K562 (cell line): ENCODE measurements at regions of chr15 and their contacts with region 1.

Region 1: DNA sequence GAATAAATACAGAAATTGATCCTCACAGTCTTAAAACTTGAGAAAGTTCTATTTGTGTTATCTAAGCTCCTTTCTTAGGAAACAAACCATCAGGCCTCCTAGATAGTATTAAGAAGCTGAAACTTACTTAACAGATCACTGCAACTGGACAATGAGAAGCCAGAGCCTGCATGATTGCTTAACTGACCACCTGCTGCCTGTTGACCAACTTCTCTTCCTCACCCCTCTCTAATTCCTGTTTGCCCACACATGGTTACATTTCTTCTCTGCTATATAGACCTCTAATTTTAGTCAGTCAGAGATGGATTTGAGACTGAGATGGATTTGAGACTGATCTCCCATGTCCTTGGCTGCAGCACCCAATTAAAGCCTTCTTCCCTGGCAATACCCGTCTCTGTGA is 13.5 kb downstream of the CCPG1 start:
- DNase-seq: no peak
- ATAC-seq: no peak
- H3K4me3 ChIP-seq: no peak overlapping the region
- H3K27ac ChIP-seq: no peak overlapping the region
- H3K4me1 ChIP-seq: peaks cover 12 to 19% of the 10 kb centered on the region in 2 experiments
- H3K27me3 ChIP-seq: no peaks in the 10 kb centered on the region
- CTCF ChIP-seq: no peak
- EP300 ChIP-seq: no peak
- POLR2A ChIP-seq: no peak
- RAD21 ChIP-seq: no peak

Region 2: DNA sequence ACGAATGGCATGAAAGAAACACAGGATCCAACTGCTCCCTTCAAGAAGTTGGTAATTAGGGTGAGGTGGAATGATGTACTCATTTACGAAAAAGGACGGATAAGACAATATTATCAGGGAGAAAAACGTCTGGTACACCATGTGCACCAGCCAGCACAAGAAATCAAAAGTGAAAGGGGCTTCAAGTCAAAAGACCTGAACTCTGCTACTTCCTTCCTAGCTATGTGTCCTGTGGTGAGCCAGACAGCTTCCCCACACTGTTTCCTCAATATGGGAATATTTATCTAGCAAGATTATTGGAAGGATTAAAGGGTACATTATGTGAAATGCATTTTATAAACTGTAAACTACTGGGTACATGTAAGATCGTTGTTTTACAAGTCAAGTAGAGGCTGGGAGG is 139.0 kb before region 1 on chr15:
- CTCF ChIA-PET with region 1: no interaction called
- POLR2A ChIA-PET with region 1: no interaction called
- in situ Hi-C with region 1: no loop called
- intact Hi-C with region 1: no loop called
- DNase-seq: no peak
- ATAC-seq: peak; percentile 12; the same call in 1 of the 3 replicates
- H3K4me3 ChIP-seq: no peak overlapping the region
- H3K27ac ChIP-seq: 0 out of 3 replicates have a peak overlapping the region, but pooled peaks have one; percentile 10
- H3K4me1 ChIP-seq: peaks cover 3 to 50% of the 10 kb centered on the region in 2 experiments; a peak in 3 of 5 replicates
- H3K27me3 ChIP-seq: no peaks in the 10 kb centered on the region
- CTCF ChIP-seq: no peak
- EP300 ChIP-seq: no peak
- POLR2A ChIP-seq: no peak
- RAD21 ChIP-seq: no peak

Region 3: DNA sequence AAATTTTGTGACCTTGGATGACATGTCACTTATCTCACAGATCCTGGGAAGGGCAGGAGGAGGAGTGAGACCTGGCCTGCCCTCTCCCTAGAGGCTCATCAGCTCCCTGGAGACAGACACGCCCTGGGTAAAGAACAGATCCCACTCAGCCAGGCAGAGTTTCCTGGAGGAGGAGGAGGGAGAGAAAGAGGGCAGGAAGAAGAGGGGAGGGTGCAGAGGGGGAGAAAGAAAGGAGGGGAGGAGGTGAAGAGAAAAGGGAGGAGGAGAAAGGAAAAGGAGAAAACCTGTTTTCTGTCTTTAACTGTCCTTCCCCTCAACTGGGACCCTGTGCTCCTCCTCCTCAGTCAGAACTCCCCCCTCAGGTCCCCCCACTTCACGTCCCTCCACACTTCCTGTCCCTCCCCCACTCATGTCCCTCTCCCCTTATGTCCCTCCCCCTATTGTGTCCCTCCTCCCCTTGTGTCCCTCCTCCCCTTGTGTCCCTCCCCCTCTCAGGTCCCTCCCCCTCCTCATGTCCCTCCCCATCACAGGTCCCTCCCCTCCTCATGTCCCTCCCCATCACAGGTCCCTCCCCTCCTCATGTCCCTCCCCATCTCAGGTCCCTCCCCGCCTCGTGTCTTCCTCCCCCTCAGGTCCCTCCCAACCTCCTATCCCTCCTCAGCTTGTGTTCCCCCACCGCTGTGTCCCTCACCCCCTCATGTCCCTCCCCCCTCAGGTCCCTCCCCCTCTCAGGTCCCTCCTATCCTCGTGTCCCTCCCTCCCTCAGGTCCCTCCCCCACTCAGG is 1929.3 kb after region 1 on chr15:
- CTCF ChIA-PET with region 1: no interaction called
- POLR2A ChIA-PET with region 1: no interaction called
- in situ Hi-C with region 1: no loop called
- intact Hi-C with region 1: loop called (anchors 5 kb)
- DNase-seq: peak; percentile 97 to 98 (median 98)
- ATAC-seq: peak; percentile 84
- H3K4me3 ChIP-seq: peak overlapping the region; percentile 28
- H3K27ac ChIP-seq: peak overlapping the region; percentile 99
- H3K4me1 ChIP-seq: peaks cover 56 to 68% of the 10 kb centered on the region in 2 experiments
- H3K27me3 ChIP-seq: no peaks in the 10 kb centered on the region
- CTCF ChIP-seq: no peak
- EP300 ChIP-seq: peak; percentile 46
- POLR2A ChIP-seq: peak; percentile 82
- RAD21 ChIP-seq: no peak